GM12878 (cell line): ENCODE measurements at regions of chr4 and their contacts with region 1.

Region 1: GRCh38 chr4:105715692-105716278 is 7.2 kb downstream of the GSTCD start:
- DNase-seq: no peak
- ATAC-seq: 0 out of 3 replicates have a peak, but pooled peaks have one; percentile 10
- H3K4me3 ChIP-seq: no peak overlapping the region
- H3K27ac ChIP-seq: no peak overlapping the region
- H3K4me1 ChIP-seq: peaks cover 3% of the 10 kb centered on the region; the same call in 1 of the 2 replicates
- H3K27me3 ChIP-seq: no peaks in the 10 kb centered on the region
- CTCF ChIP-seq: peak; percentile 17 to 48 (median 36); a peak in 2 of 6 replicates
- EP300 ChIP-seq: no peak
- POLR2A ChIP-seq: no peak
- RAD21 ChIP-seq: peak; percentile 49

Region 2: GRCh38 chr4:105496899-105497298 is 218.9 kb before region 1 on chr4:
- CTCF ChIA-PET with region 1: interaction called, 14 read pairs
- POLR2A ChIA-PET with region 1: no interaction called
- RAD21 ChIA-PET with region 1: interaction called, 4 read pairs
- SMC1A ChIA-PET with region 1: interaction called, 9 read pairs
- in situ Hi-C with region 1: no loop called
- intact Hi-C with region 1: no loop called
- DNase-seq: no peak
- ATAC-seq: peak; percentile 68
- H3K4me3 ChIP-seq: no peak overlapping the region
- H3K27ac ChIP-seq: no peak overlapping the region
- H3K4me1 ChIP-seq: no peaks in the 10 kb centered on the region
- H3K27me3 ChIP-seq: no peaks in the 10 kb centered on the region
- CTCF ChIP-seq: peak; percentile 34 to 39 (median 38); a peak in 3 of 6 replicates
- EP300 ChIP-seq: no peak
- POLR2A ChIP-seq: no peak
- RAD21 ChIP-seq: peak; percentile 66

Region 3: DNA sequence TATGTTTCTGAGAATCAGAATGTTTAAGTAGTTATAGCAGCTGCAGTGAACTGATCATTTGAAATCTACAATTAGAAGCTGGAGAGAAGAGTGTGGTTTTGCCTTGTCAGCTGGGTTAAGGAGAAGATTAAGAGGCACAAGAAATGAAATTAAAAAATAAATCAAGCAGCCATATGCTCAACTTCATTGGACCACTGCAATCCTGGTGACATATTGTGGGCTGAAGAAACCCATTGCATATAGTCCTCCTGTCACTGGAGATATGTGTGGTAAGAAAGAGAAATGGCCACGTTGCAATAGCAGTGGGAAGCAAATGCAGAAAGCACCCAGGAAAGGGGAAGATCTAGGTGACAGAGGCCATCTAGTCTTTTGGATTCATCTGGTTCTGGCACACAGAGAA is 70.3 kb before region 1 on chr4:
- CTCF ChIA-PET with region 1: no interaction called
- POLR2A ChIA-PET with region 1: no interaction called
- RAD21 ChIA-PET with region 1: no interaction called
- SMC1A ChIA-PET with region 1: no interaction called
- in situ Hi-C with region 1: no loop called
- intact Hi-C with region 1: no loop called
- DNase-seq: no peak
- ATAC-seq: no peak
- H3K4me3 ChIP-seq: no peak overlapping the region
- H3K27ac ChIP-seq: no peak overlapping the region
- H3K4me1 ChIP-seq: no peaks in the 10 kb centered on the region
- H3K27me3 ChIP-seq: no peaks in the 10 kb centered on the region
- CTCF ChIP-seq: no peak
- EP300 ChIP-seq: no peak
- POLR2A ChIP-seq: no peak
- RAD21 ChIP-seq: no peak

Region 4: GRCh38 chr4:105751718-105752299 is 36.0 kb after region 1 on chr4:
- CTCF ChIA-PET with region 1: interaction called, 13 read pairs
- POLR2A ChIA-PET with region 1: no interaction called
- RAD21 ChIA-PET with region 1: interaction called, 7 read pairs
- SMC1A ChIA-PET with region 1: interaction called, 8 read pairs
- in situ Hi-C with region 1: no loop called
- intact Hi-C with region 1: no loop called
- DNase-seq: no peak
- ATAC-seq: peak; percentile 70
- H3K4me3 ChIP-seq: no peak overlapping the region
- H3K27ac ChIP-seq: no peak overlapping the region
- H3K4me1 ChIP-seq: no peaks in the 10 kb centered on the region
- H3K27me3 ChIP-seq: no peaks in the 10 kb centered on the region
- CTCF ChIP-seq: no peak
- EP300 ChIP-seq: no peak
- POLR2A ChIP-seq: no peak
- RAD21 ChIP-seq: no peak